ENCODE measurements at regions of chr1 and their contacts with region 1.

Region 1: DNA sequence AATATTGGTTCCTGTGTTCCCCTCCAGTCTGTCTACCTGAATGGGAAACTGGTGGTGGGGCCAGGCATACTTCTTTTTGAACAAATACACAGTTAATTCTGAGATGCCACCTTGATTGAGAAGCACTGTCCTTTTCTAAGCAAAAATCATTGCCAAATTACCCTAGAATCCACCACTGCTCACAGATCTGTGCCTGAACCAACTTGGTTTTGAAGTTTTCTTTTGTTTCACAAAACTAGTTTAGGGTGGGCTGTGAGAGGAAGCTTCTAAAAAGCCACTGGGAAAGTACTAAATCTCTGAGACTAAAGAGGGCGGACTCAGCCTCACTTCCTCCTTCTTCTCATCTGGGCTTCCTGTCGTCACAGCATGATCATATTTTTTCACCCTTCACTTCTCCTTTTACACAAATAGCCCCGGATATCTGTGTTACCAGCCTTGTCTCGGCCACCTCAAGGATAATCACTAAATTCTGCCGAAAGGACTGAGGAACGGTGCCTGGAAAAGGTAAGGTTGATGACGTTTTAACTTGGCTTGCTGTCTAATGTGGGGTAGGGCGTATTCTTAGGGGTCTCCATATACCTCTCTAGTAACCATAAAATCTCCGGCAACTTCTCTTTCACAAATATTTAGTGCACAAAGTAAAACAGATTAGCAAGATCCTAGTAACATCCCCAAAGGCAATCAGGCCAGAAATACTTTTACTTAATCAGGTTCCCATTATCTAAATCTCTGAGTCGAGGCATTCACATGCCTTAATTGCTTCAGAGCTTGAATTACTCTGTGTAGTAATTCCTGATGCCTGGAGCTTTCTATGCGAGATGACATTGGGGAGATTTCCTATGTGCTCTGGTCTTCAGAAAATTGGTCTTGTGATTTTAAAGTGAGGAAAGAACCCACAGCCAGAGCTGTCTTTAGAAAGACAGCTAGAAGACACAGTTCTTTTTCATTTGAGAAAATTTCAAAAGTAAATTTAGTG is at the start of gene CD53:
- DNase-seq: peak in 9 of 10 donors; percentile 50 to 86 (median 75)
- ATAC-seq: peak; percentile 74 to 83
- H3K4me3 Mint-ChIP-seq: peak within 1 kb of the TSS; percentile 92 to 100 (median 98)
- H3K27ac Mint-ChIP-seq: peak within 1 kb of the TSS; percentile 96 to 100 (median 99)
- H3K4me1 Mint-ChIP-seq: peaks cover 38 to 67% (median 59%) of the 10 kb centered on the region in 4 donors
- H3K27me3 Mint-ChIP-seq: no peaks in the 10 kb centered on the region
- polyA plus RNA-seq, gene CD53: 619 to 909 (median 820) TPM

Region 2: GRCh38 chr1:110657351-110657750 is 215.7 kb before region 1 on chr1:
- POLR2A ChIA-PET with region 1: no interaction called
- DNase-seq: no peak
- ATAC-seq: no peak
- H3K4me3 Mint-ChIP-seq: no peak overlapping the region
- H3K27ac Mint-ChIP-seq: peak overlapping the region in 3 of 10 donors; percentile 38 to 51 (median 40)
- H3K4me1 Mint-ChIP-seq: peaks cover 8 to 27% (median 26%) of the 10 kb centered on the region in 4 donors
- H3K27me3 Mint-ChIP-seq: no peaks in the 10 kb centered on the region

Region 3: GRCh38 chr1:110903853-110904484 is 30.9 kb after region 1 on chr1:
- POLR2A ChIA-PET with region 1: interaction called, 16 read pairs
- DNase-seq: no peak
- ATAC-seq: no peak
- H3K4me3 Mint-ChIP-seq: peak overlapping the region in 1 of 10 donors; percentile 5
- H3K27ac Mint-ChIP-seq: peak overlapping the region; percentile 28 to 89 (median 66)
- H3K4me1 Mint-ChIP-seq: peaks cover 12 to 43% (median 24%) of the 10 kb centered on the region in 4 donors
- H3K27me3 Mint-ChIP-seq: no peaks in the 10 kb centered on the region

Region 4: GRCh38 chr1:110963691-110964399 is 90.8 kb after region 1 on chr1 and contains the start of gene LRIF1:
- POLR2A ChIA-PET with region 1: interaction called, 22 read pairs
- DNase-seq: peak; percentile 91 to 100 (median 100)
- ATAC-seq: peak; percentile 92 to 94
- H3K4me3 Mint-ChIP-seq: peak within 1 kb of the TSS; percentile 79 to 99 (median 94)
- H3K27ac Mint-ChIP-seq: peak within 1 kb of the TSS; percentile 89 to 100 (median 99)
- H3K4me1 Mint-ChIP-seq: peaks cover 23 to 40% (median 30%) of the 10 kb centered on the region in 4 donors
- H3K27me3 Mint-ChIP-seq: peaks cover 8 to 16% (median 9%) of the 10 kb centered on the region in 5 donors
- polyA plus RNA-seq, gene LRIF1: 22.2 to 26.4 (median 26.3) TPM

Measured in naive thymus-derived CD8-positive, alpha-beta T cell (primary cell).